ENCODE measurements at regions of chr12 and their contacts with region 1.

Region 1: GRCh38 chr12:93441617-93442410 is at the start of gene UBE2N:
- DNase-seq: peak; percentile 88 to 99
- H3K4me3 ChIP-seq: peak within 1 kb of the TSS; percentile 80 to 87
- H3K27ac ChIP-seq: peak within 1 kb of the TSS; percentile 83 to 94
- H3K4me1 ChIP-seq: peaks cover 2 to 19% of the 10 kb centered on the region in 2 donors
- H3K27me3 ChIP-seq: no peaks in the 10 kb centered on the region
- CTCF ChIP-seq: no peak
- total RNA-seq, gene UBE2N: 19.4 TPM

Region 2: GRCh38 chr12:93467351-93468007 is 25.7 kb after region 1 on chr12 and contains the start of gene MRPL42:
- intact Hi-C with region 1: loop called (anchors 1 kb)
- DNase-seq: peak; percentile 48 to 95
- H3K4me3 ChIP-seq: peak within 1 kb of the TSS; percentile 82 to 84
- H3K27ac ChIP-seq: peak within 1 kb of the TSS; percentile 89
- H3K4me1 ChIP-seq: peaks cover 0 to 9% of the 10 kb centered on the region in 2 donors
- H3K27me3 ChIP-seq: no peaks in the 10 kb centered on the region
- CTCF ChIP-seq: peak; percentile 72 to 84 (median 81)
- total RNA-seq, gene MRPL42: 8.4 TPM

Measured in ascending aorta (tissue), 2 donors.